Naive thymus-derived CD4-positive, alpha-beta T cell (primary cell): ENCODE measurements at regions of chr1 and their contacts with region 1.

Region 1: GRCh38 chr1:36359911-36360550 is 25.7 kb downstream of the STK40 start:
- DNase-seq: peak in 7 of 9 donors; percentile 43 to 77 (median 74)
- ATAC-seq: peak; percentile 95
- H3K4me3 ChIP-seq: no peak overlapping the region
- H3K4me3 Mint-ChIP-seq: peak overlapping the region in 9 of 10 donors; percentile 35 to 79 (median 61)
- H3K27ac ChIP-seq: peak overlapping the region; percentile 52
- H3K27ac Mint-ChIP-seq: peak overlapping the region; percentile 91 to 99 (median 94)
- H3K4me1 ChIP-seq: peaks cover 0 to 19% of the 10 kb centered on the region in 2 donors
- H3K4me1 Mint-ChIP-seq: peaks cover 7 to 29% (median 27%) of the 10 kb centered on the region in 7 donors
- H3K27me3 ChIP-seq: no peaks in the 10 kb centered on the region
- H3K27me3 Mint-ChIP-seq: no peaks in the 10 kb centered on the region

Region 2: DNA sequence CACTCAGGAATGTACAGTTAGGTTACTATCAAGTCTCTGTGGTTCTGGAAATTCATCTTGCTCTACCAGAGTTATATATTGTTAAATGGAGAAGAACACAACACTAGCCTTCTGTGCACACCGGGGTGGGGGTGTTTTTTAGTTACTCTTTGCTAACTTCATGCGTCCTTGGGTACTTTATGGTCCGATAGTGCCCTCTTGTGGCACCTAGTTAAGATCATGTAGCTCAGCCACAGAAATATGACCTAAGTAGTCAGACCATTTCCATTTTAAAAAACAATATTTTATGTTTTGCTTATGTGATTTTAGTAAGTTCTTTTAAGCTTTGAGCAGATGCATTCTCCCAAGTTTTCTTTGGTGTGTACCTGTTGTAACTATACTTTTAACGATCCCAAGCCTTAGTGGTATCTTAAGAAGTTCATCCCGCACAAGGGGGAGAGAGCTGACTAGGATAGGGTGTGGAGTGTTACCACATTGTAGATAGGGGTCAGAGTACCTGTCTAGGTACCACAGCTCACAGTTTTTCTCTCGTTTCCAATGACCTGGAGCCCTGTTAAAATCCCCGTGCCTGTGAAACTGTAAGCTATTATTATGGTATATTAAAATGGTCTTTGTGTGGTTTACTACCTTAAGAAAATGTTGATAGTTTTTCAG is 74.5 kb before region 1 on chr1:
- CTCF ChIA-PET with region 1: no interaction called
- POLR2A ChIA-PET with region 1: no interaction called
- intact Hi-C with region 1: no loop called
- DNase-seq: peak in 7 of 9 donors; percentile 60 to 80 (median 73)
- ATAC-seq: peak; percentile 96
- H3K4me3 ChIP-seq: no peak overlapping the region
- H3K4me3 Mint-ChIP-seq: no peak overlapping the region
- H3K27ac ChIP-seq: no peak overlapping the region
- H3K27ac Mint-ChIP-seq: peak overlapping the region in 8 of 9 donors; percentile 3 to 87 (median 42)
- H3K4me1 ChIP-seq: no peaks in the 10 kb centered on the region
- H3K4me1 Mint-ChIP-seq: peaks cover 4 to 34% (median 17%) of the 10 kb centered on the region in 7 donors
- H3K27me3 ChIP-seq: no peaks in the 10 kb centered on the region
- H3K27me3 Mint-ChIP-seq: no peaks in the 10 kb centered on the region

Region 3: DNA sequence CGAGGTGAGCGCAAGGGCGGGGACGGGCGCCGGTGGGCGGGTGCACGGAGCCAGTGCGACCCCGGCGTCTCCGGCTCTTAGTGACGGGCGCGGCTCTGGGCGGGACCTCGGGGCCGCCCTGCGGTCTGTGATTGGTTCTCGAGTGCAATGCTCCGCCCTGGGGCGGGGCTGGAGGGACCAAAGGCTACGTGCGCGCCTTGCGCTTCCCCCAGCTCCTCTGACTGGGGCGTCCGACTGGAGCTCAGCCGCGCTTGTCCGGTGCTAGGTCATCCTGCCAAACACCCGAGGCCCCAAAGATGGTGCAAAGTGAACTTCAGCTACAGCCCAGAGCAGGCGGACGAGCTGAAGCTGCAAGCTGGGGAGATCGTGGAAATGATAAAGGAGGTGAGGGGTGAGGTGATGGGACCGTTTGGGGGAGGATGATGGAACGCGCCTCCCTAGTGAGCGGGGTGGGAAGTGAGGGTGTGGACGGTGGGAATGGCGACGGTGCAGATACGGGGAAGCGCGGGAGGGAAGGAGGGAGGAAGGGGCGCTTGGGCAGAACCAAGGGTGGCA is 53.1 kb before region 1 on chr1:
- CTCF ChIA-PET with region 1: interaction called, 3 read pairs
- POLR2A ChIA-PET with region 1: interaction called, 11 read pairs
- intact Hi-C with region 1: no loop called
- DNase-seq: peak; percentile 90 to 96 (median 93)
- ATAC-seq: peak; percentile 99
- H3K4me3 ChIP-seq: peak overlapping the region; percentile 87
- H3K4me3 Mint-ChIP-seq: peak overlapping the region; percentile 87 to 98 (median 96)
- H3K27ac ChIP-seq: peak overlapping the region; percentile 81
- H3K27ac Mint-ChIP-seq: peak overlapping the region; percentile 70 to 97 (median 87)
- H3K4me1 ChIP-seq: peaks cover 0 to 6% of the 10 kb centered on the region in 2 donors
- H3K4me1 Mint-ChIP-seq: peaks cover 6 to 39% (median 13%) of the 10 kb centered on the region in 7 donors
- H3K27me3 ChIP-seq: no peaks in the 10 kb centered on the region
- H3K27me3 Mint-ChIP-seq: no peaks in the 10 kb centered on the region

Region 4: DNA sequence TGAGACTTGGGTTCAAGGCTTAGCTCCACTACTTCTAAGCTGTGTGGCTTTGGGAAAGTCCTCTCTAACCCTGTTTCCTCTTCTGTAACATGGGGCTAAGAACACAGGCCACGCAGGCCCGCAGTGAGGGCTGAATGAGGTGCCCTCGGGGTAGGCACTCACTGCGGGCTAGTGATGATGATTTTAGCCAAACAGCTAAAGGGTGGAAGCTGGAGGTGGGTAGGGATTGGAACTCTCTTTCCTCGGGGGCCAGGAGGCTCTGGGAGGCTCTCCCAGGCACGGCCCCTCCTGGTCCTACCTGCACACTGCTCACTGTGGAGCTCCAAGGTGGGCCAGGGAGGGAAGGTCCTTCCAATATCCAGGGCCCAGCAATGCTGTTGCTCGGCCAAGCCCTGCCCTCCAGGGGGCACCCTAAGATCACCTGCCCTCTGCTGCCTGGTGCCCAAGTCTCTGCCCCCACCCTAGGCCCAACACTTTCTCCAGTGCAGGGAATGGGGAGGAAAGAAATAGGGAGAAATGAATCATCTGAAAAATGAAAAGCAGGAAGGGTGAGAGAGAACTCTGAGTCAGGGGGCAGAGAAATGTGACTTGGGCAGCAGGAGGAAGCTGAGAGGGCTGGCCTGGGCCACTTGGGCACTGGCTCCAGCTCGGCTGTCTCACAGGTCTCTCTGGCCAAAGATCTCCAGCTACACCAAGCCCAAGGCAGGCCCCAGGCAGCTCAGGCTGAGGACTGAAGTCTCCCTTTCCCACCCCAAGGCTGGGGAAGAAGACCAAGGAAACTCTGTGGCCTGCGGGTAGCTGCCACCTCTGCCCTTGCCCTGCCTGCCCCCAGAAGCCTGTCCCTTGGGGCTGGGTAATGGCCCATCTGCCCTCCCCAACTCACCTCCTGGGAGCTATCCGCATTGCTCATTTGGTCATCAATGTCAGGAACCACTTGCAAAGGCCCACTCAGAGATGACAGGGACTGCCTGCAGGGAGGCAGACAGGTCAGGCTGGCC is 17.3 kb before region 1 on chr1:
- CTCF ChIA-PET with region 1: interaction called, 176 read pairs
- POLR2A ChIA-PET with region 1: interaction called, 155 read pairs
- intact Hi-C with region 1: no loop called
- DNase-seq: peak; percentile 47 to 72 (median 58)
- ATAC-seq: peak; percentile 86
- H3K4me3 ChIP-seq: no peak overlapping the region
- H3K4me3 Mint-ChIP-seq: no peak overlapping the region
- H3K27ac ChIP-seq: no peak overlapping the region
- H3K27ac Mint-ChIP-seq: peak overlapping the region in 6 of 9 donors; percentile 32 to 86 (median 71)
- H3K4me1 ChIP-seq: peaks cover 0 to 8% of the 10 kb centered on the region in 2 donors
- H3K4me1 Mint-ChIP-seq: peaks cover 6 to 40% (median 28%) of the 10 kb centered on the region in 7 donors
- H3K27me3 ChIP-seq: no peaks in the 10 kb centered on the region
- H3K27me3 Mint-ChIP-seq: no peaks in the 10 kb centered on the region